ENCODE measurements at regions of chr2 and their contacts with region 1.

Region 1: DNA sequence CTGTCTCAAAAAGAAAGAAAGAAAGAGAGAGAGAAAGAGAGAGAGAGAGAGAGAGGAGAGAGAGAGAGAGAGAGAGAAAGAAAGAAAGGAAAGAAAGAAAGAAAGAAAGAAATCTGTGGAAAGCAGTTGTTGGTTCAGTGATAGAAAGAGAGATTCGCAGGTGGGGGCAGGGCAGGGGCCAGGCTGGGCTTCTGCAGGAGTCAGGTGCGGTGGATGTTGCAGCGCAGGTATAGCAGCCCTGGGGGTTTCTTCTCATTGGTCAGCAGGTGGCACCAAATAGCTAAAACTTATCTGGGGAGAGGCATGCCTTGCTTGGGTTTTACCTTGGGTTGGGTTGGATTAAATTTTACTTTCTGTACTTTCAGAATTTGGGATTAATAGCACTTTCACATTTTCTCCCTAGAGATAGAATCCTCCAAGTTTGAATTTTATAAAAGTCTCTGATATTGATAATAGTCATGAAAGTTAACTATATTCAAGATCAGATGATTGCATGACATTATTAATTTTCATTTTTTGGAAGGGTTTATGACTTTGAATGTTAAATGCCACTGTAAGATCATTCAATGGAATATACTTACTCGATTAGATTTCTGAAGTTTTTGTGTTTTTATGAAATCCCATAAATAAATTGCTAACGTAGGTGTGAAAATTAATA is 66.6 kb downstream of the SPTBN1 start:
- DNase-seq: peak; percentile 47
- ATAC-seq: peak; percentile 94
- H3K4me3 ChIP-seq: no peak overlapping the region
- H3K27ac ChIP-seq: no peak overlapping the region
- H3K4me1 ChIP-seq: peaks cover 15% of the 10 kb centered on the region
- H3K27me3 ChIP-seq: no peaks in the 10 kb centered on the region
- CTCF ChIP-seq: peak; percentile 71 to 84 (median 72)
- EP300 ChIP-seq: no peak
- POLR2A ChIP-seq: no peak
- RAD21 ChIP-seq: peak; percentile 93

Region 2: DNA sequence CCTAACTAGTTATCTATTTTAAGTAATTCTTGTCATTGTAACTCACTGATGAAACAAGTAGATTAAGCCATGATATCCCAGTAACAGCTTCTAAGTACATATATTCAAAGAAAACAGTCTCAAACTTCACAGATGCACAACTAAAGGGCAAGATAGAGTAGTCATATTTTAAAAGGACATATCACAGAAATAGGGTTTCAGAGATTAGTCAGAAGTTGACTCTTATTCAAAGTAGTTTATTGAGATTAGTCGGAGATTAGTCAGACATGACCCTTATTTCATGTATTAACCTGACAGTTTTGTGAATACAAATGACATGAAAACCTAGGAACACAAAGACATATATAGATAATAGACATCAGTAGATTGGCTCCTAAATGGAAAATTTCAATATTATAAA is 771.0 kb before region 1 on chr2:
- CTCF ChIA-PET with region 1: no interaction called
- POLR2A ChIA-PET with region 1: no interaction called
- RAD21 ChIA-PET with region 1: no interaction called
- SMC1A ChIA-PET with region 1: no interaction called
- in situ Hi-C with region 1: no loop called
- intact Hi-C with region 1: no loop called
- DNase-seq: no peak
- ATAC-seq: peak; percentile 94
- H3K4me3 ChIP-seq: no peak overlapping the region
- H3K27ac ChIP-seq: peak overlapping the region; percentile 54; the same call in 1 of the 2 replicates
- H3K4me1 ChIP-seq: peaks cover 22% of the 10 kb centered on the region; the same call in 1 of the 2 replicates
- H3K27me3 ChIP-seq: no peaks in the 10 kb centered on the region
- CTCF ChIP-seq: no peak
- EP300 ChIP-seq: no peak
- POLR2A ChIP-seq: no peak
- RAD21 ChIP-seq: no peak

Region 3: DNA sequence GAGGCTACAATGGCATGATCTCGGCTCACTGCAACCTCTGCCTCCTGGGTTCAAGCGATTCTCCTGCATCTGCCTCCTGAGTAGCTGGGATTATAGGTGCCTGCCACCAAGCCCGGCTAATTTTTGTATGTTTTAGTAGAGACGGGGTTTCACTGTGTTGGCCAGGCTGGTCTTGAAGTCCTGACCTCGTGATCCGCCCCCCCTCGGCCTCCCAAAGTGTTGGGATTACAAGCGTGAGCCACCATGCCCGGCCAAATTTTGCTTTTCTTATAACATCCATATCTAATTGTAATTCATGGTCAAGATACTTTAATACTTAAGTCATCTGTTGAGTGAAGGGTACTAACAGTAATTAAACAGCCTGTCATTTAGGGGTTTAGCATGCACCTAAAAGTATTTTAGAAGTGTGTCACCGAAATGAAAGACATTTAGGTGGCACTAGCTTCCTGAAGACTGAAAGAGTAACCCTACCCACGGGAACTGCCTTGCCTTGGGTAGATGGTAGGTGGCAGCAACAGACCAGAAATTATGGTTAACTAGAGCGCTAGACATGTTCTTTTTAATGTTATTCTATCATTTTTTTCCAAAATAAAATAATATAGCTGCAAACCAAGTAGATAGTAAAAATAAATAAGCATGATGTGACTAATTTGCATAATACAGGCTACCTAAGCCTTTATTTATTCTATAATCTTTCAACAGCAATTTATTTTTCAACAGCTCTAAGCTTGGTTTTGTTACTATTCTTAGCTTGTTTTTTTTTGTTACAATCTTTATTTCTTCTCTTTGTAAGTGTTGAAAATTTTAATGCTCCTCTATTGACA is 415.9 kb before region 1 on chr2:
- CTCF ChIA-PET with region 1: interaction called, 20 read pairs
- POLR2A ChIA-PET with region 1: no interaction called
- RAD21 ChIA-PET with region 1: interaction called, 15 read pairs
- SMC1A ChIA-PET with region 1: interaction called, 4 read pairs
- in situ Hi-C with region 1: no loop called
- intact Hi-C with region 1: no loop called
- DNase-seq: no peak
- ATAC-seq: peak; percentile 83
- H3K4me3 ChIP-seq: no peak overlapping the region
- H3K27ac ChIP-seq: no peak overlapping the region
- H3K4me1 ChIP-seq: no peaks in the 10 kb centered on the region
- H3K27me3 ChIP-seq: no peaks in the 10 kb centered on the region
- CTCF ChIP-seq: peak; percentile 59 to 73 (median 60); a peak in 5 of 6 replicates
- EP300 ChIP-seq: no peak
- POLR2A ChIP-seq: no peak
- RAD21 ChIP-seq: peak; percentile 73

Region 4: DNA sequence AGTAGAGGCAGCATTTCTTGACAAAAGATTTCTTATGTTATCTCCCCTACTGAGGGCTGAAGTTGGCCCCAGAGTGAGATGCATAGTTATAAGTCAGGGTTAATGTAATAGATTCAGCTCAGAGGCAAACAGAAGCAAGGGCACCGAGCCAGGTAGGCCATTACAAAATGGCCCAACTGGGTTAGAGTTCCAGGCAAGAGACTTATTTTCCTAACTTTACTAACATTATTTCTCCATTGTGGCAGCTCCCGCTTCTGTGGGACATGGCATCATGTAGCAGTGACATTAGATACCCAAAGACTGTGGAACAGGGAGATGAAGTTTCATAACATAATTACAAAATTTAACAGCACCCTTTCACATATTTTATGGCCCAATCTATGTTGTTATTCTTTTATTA is 293.8 kb before region 1 on chr2:
- CTCF ChIA-PET with region 1: no interaction called
- POLR2A ChIA-PET with region 1: no interaction called
- RAD21 ChIA-PET with region 1: no interaction called
- SMC1A ChIA-PET with region 1: no interaction called
- in situ Hi-C with region 1: no loop called
- intact Hi-C with region 1: no loop called
- DNase-seq: no peak
- ATAC-seq: no peak
- H3K4me3 ChIP-seq: no peak overlapping the region
- H3K27ac ChIP-seq: no peak overlapping the region
- H3K4me1 ChIP-seq: no peaks in the 10 kb centered on the region
- H3K27me3 ChIP-seq: no peaks in the 10 kb centered on the region
- CTCF ChIP-seq: no peak
- EP300 ChIP-seq: no peak
- POLR2A ChIP-seq: no peak
- RAD21 ChIP-seq: no peak

Region 5: DNA sequence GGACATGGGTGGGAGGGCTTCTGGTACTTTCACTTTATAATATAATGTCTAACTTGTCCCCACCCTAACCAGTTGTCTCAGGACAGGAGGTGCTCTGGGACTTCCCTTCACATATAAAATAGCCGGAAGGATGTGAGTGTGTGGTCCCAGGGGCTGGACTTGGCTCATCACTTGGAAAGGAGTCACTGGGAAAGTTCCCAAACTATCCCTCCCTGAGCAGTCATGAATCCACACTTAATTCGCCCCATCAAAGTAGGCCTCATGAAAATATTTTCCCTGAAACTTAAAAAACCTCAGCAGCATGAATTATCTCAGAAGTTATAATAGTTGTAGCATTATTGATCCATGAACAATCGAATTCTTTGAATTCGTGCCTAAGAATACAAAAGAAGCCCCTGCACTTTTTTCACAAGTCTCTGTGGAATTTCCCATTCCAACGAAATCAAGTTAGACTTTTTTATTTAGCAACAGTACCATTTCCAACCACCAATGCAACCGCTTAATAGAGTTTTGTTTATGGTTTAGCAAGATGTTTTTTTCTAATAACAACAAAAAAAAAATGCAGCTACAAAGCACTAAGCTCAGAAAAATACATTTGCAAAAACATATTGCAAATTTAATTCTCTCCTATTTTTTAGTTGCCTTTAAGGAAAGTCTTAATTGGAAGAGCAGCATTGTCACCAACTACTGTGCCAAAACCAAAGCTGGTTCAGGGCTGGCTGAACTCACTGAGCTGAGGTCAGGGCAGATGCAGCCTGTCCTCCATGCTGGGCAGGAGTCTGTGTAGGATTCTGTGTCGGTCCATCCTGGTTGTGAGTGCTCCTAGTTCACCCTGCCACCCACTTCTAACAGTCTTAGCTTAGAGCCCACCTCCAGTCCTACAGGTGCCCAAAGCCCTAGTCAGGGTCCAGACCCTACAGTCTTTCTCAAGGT is 135.4 kb before region 1 on chr2:
- CTCF ChIA-PET with region 1: no interaction called
- POLR2A ChIA-PET with region 1: no interaction called
- RAD21 ChIA-PET with region 1: no interaction called
- SMC1A ChIA-PET with region 1: no interaction called
- in situ Hi-C with region 1: no loop called
- intact Hi-C with region 1: no loop called
- DNase-seq: no peak
- ATAC-seq: no peak; the same call in 2 of the 3 replicates
- H3K4me3 ChIP-seq: no peak overlapping the region
- H3K27ac ChIP-seq: no peak overlapping the region
- H3K4me1 ChIP-seq: no peaks in the 10 kb centered on the region
- H3K27me3 ChIP-seq: no peaks in the 10 kb centered on the region; a peak in 1 of 4 replicates
- CTCF ChIP-seq: no peak
- EP300 ChIP-seq: no peak
- POLR2A ChIP-seq: no peak
- RAD21 ChIP-seq: no peak

Region 6: GRCh38 chr2:54558188-54559005 is 35.6 kb after region 1 on chr2:
- CTCF ChIA-PET with region 1: interaction called, 25 read pairs
- POLR2A ChIA-PET with region 1: interaction called, 43 read pairs
- RAD21 ChIA-PET with region 1: interaction called, 157 read pairs
- SMC1A ChIA-PET with region 1: interaction called, 63 read pairs
- in situ Hi-C with region 1: no loop called
- intact Hi-C with region 1: loop called (anchors 1 kb)
- DNase-seq: no peak
- ATAC-seq: peak; percentile 63
- H3K4me3 ChIP-seq: peak overlapping the region; percentile 99
- H3K27ac ChIP-seq: peak overlapping the region; percentile 96
- H3K4me1 ChIP-seq: peaks cover 18% of the 10 kb centered on the region
- H3K27me3 ChIP-seq: no peaks in the 10 kb centered on the region
- CTCF ChIP-seq: no peak
- EP300 ChIP-seq: no peak
- POLR2A ChIP-seq: peak; percentile 78
- RAD21 ChIP-seq: no peak

Region 7: GRCh38 chr2:54597153-54597848 is 74.5 kb after region 1 on chr2:
- CTCF ChIA-PET with region 1: interaction called, 27 read pairs
- POLR2A ChIA-PET with region 1: interaction called, 3 read pairs
- RAD21 ChIA-PET with region 1: interaction called, 14 read pairs
- SMC1A ChIA-PET with region 1: interaction called, 19 read pairs
- in situ Hi-C with region 1: no loop called
- intact Hi-C with region 1: no loop called
- DNase-seq: no peak
- ATAC-seq: peak; percentile 65
- H3K4me3 ChIP-seq: no peak overlapping the region
- H3K27ac ChIP-seq: peak overlapping the region; percentile 84
- H3K4me1 ChIP-seq: peaks cover 49% of the 10 kb centered on the region
- H3K27me3 ChIP-seq: no peaks in the 10 kb centered on the region
- CTCF ChIP-seq: no peak
- EP300 ChIP-seq: no peak
- POLR2A ChIP-seq: peak; percentile 21; the same call in 1 of the 2 replicates
- RAD21 ChIP-seq: peak; percentile 23; the same call in 1 of the 2 replicates

Region 8: DNA sequence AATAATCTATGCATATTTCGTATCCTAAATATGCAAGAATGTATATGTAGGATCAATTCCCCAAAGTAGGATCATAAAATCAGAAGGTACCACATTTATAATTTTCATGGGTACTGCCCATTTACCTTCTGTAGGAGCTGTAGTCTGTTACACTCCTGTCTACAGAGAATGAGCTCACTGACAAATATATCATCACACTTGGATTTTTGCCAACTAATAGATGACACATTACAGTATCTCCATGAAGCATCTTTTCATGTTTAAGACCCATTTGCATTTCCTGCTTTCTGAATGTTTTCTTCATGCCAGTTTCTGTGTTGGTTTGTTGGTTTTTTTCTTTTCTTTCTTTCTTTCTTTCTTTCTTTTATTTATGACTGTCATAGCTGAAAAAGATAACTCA is 129.8 kb after region 1 on chr2:
- CTCF ChIA-PET with region 1: interaction called, 59 read pairs
- POLR2A ChIA-PET with region 1: interaction called, 4 read pairs
- RAD21 ChIA-PET with region 1: interaction called, 16 read pairs
- SMC1A ChIA-PET with region 1: interaction called, 28 read pairs
- in situ Hi-C with region 1: no loop called
- intact Hi-C with region 1: loop called (anchors 5 kb)
- DNase-seq: no peak
- ATAC-seq: peak; percentile 67
- H3K4me3 ChIP-seq: no peak overlapping the region
- H3K27ac ChIP-seq: no peak overlapping the region
- H3K4me1 ChIP-seq: no peaks in the 10 kb centered on the region
- H3K27me3 ChIP-seq: no peaks in the 10 kb centered on the region
- CTCF ChIP-seq: no peak
- EP300 ChIP-seq: no peak
- POLR2A ChIP-seq: no peak
- RAD21 ChIP-seq: no peak

Region 9: DNA sequence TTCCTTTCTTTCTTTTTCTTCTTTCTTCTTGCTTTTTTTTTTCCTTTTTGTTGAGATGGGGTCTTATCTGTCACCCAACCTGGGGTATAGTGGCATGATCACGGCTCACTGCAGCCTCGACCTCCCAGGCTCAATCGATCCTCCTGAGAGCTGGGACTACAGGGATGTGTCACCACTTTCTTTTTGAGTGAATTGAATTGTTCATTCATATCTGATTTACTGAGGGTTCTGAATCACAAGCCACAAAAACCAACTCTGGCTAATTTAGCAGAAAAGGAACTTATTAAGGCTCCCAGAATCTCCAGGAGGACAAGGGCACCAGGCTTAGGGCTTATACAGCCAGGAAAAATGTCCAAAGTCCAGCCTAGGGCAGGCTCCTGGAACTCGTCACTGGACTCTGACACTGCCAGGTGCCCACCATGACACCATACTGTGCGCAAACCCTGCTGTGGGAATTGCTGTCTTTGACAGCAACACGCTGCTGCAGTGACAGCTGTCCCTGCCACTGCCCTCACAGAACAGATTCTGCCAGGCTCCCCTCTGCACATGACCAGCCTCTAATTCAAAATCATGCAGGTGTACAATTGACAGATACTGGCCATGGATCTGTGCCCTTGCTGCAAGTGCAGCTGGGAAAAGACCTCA is 157.8 kb after region 1 on chr2:
- CTCF ChIA-PET with region 1: interaction called, 11 read pairs
- POLR2A ChIA-PET with region 1: no interaction called
- RAD21 ChIA-PET with region 1: interaction called, 28 read pairs
- SMC1A ChIA-PET with region 1: interaction called, 26 read pairs
- in situ Hi-C with region 1: no loop called
- intact Hi-C with region 1: no loop called
- DNase-seq: peak; percentile 77
- ATAC-seq: peak; percentile 81
- H3K4me3 ChIP-seq: peak overlapping the region; percentile 34; the same call in 1 of the 2 replicates
- H3K27ac ChIP-seq: peak overlapping the region; percentile 47
- H3K4me1 ChIP-seq: peaks cover 31% of the 10 kb centered on the region
- H3K27me3 ChIP-seq: no peaks in the 10 kb centered on the region; a peak in 1 of 4 replicates
- CTCF ChIP-seq: no peak
- EP300 ChIP-seq: peak; percentile 48 to 84; a peak in 3 of 4 replicates
- POLR2A ChIP-seq: no peak
- RAD21 ChIP-seq: no peak

Region 10: DNA sequence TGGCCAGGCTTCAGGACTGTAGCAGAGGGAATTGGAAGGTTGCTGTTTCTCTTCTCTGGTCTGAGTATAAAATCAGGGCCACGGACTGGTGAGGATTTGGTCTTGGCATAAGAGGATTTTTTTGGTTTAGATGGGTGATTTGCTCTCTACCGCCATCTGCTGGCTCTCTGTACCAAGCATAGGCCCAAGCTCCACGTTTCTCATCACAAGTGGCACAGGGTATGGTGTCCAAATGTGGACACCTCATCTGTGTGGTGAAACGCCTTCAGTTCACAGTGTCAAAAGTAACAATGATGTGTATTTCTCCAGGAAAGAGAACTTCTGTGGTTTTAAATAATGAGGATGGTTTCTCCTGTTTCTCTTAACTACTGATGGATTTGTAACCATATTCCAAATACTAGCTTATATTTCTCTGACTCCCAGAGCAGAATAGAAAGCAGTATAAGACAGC is 315.9 kb after region 1 on chr2:
- CTCF ChIA-PET with region 1: interaction called, 26 read pairs
- POLR2A ChIA-PET with region 1: no interaction called
- RAD21 ChIA-PET with region 1: interaction called, 14 read pairs
- SMC1A ChIA-PET with region 1: interaction called, 10 read pairs
- in situ Hi-C with region 1: loop called (anchors 10 kb)
- intact Hi-C with region 1: no loop called
- DNase-seq: peak; percentile 20
- ATAC-seq: peak; percentile 98
- H3K4me3 ChIP-seq: no peak overlapping the region
- H3K27ac ChIP-seq: no peak overlapping the region
- H3K4me1 ChIP-seq: no peaks in the 10 kb centered on the region
- H3K27me3 ChIP-seq: no peaks in the 10 kb centered on the region
- CTCF ChIP-seq: peak; percentile 82 to 91 (median 91)
- EP300 ChIP-seq: no peak
- POLR2A ChIP-seq: no peak
- RAD21 ChIP-seq: peak; percentile 74